ENCODE measurements at regions of chr12 and their contacts with region 1.

Region 1: GRCh38 chr12:124940549-124941527 is 26.4 kb upstream of the UBC start:
- DNase-seq: peak; percentile 96
- H3K4me3 Mint-ChIP-seq: no peak overlapping the region
- H3K27ac Mint-ChIP-seq: no peak overlapping the region
- H3K4me1 Mint-ChIP-seq: peaks cover 8% of the 10 kb centered on the region
- H3K27me3 Mint-ChIP-seq: no peaks in the 10 kb centered on the region

Region 2: GRCh38 chr12:124863416-124864325 is 77.2 kb before region 1 on chr12 and contains the start of gene SCARB1:
- CTCF ChIA-PET with region 1: interaction called, 3 read pairs
- intact Hi-C with region 1: loop called (anchors 1 kb)
- DNase-seq: peak; percentile 79
- H3K4me3 Mint-ChIP-seq: peak within 1 kb of the TSS; percentile 78
- H3K27ac Mint-ChIP-seq: peak within 1 kb of the TSS; percentile 84
- H3K4me1 Mint-ChIP-seq: peaks cover 16% of the 10 kb centered on the region
- H3K27me3 Mint-ChIP-seq: peaks cover 1% of the 10 kb centered on the region
- total RNA-seq, gene SCARB1: 18.2 to 18.3 TPM

Region 3: GRCh38 chr12:124906606-124907261 is 34.1 kb before region 1 on chr12:
- CTCF ChIA-PET with region 1: interaction called, 95 read pairs
- intact Hi-C with region 1: loop called (anchors 1 kb)
- DNase-seq: peak; percentile 98
- H3K4me3 Mint-ChIP-seq: no peak overlapping the region
- H3K27ac Mint-ChIP-seq: peak overlapping the region; percentile 12
- H3K4me1 Mint-ChIP-seq: peaks cover 19% of the 10 kb centered on the region
- H3K27me3 Mint-ChIP-seq: no peaks in the 10 kb centered on the region

Region 4: DNA sequence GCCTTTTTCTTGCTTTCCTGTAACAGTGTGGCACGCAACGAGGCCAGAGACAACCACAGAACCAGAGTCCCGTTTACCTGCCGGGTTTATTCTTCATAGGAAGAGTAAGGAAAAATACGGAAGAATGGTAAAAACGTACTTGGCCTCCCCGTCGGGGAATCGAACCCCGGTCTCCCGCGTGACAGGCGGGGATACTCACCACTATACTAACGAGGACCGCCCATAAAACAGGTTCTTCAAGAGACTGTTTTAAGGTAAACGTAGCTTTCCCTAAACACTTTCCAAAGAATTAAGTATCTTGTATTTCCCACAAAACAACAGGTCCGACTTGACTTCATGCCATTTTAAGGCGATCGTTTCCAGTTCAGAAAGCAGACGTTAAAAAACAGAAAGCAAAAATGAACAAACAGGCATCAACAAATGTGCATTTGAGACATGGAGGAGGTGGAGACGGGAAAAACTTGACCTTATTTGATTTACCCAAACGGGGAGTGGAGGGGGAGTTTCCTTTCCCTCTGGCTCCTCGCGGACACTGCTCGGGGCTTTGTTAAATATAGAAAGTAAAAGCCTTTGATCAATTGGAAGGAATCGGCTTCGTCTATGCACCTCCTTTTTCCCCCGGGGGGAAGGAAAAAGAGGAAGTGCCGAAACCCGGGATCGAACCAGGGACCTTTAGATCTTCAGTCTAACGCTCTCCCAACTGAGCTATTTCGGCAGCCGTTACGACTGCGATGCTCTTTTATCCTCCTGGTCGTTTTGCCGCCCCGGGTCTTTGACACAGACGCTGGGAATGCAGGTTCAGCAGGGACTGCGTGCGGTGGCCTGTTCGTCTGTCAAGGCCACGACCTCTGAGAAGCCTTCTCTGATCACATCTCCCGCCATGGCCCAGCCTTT is 13.4 kb before region 1 on chr12:
- CTCF ChIA-PET with region 1: interaction called, 49 read pairs
- intact Hi-C with region 1: loop called (anchors 1 kb)
- DNase-seq: peak; percentile 97
- H3K4me3 Mint-ChIP-seq: peak overlapping the region; percentile 95
- H3K27ac Mint-ChIP-seq: peak overlapping the region; percentile 99
- H3K4me1 Mint-ChIP-seq: peaks cover 28% of the 10 kb centered on the region
- H3K27me3 Mint-ChIP-seq: peaks cover 6% of the 10 kb centered on the region

Region 5: GRCh38 chr12:124992874-124993625 is 52.2 kb after region 1 on chr12:
- CTCF ChIA-PET with region 1: interaction called, 7 read pairs
- intact Hi-C with region 1: loop called (anchors 1 kb)
- DNase-seq: peak; percentile 97
- H3K4me3 Mint-ChIP-seq: peak overlapping the region; percentile 74
- H3K27ac Mint-ChIP-seq: peak overlapping the region; percentile 94
- H3K4me1 Mint-ChIP-seq: peaks cover 25% of the 10 kb centered on the region
- H3K27me3 Mint-ChIP-seq: no peaks in the 10 kb centered on the region